Ascending aorta (tissue), 2 donors: ENCODE measurements at regions of chr9 and their contacts with region 1.

Region 1: DNA sequence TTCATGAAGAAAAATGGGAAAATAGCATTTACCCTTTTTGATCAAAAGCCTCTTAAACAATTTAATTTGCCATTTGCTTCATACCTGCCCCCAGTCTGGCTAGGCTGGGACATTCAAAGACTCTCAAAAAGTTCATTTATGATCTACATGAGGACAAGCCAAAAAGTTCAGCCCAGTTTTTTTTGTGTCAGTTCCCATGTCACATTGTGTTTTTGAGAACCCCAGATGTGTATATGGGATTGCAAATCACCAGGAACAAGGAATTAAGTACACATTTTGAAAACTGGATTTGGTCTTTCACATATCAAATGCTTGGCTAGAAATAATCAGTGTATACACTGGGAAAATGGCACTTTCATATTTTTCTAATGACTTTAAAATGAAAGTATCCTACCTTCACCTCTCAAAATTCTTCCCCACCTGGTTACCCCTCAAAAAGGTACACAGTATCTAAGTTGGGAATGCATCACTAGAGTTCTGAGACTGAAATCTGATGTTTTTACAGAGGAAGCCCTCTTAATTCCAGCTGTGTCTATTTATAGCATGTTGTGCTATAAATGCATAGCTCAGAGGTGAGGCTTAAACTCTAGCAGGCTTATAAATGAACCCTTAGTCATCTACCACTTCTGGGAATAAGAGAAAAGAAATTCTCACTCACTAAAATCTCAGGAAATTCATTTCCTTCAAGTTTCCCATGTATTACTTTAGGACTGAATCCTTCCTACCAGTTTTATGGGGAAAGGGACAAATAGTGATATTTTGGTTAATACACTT is 9.3 kb downstream of the STOM start:
- DNase-seq: no peak
- H3K4me3 ChIP-seq: no peak overlapping the region
- H3K27ac ChIP-seq: peak overlapping the region; percentile 85 to 98
- H3K4me1 ChIP-seq: peaks cover 14 to 61% of the 10 kb centered on the region in 2 donors
- H3K27me3 ChIP-seq: no peaks in the 10 kb centered on the region
- CTCF ChIP-seq: no peak

Region 2: DNA sequence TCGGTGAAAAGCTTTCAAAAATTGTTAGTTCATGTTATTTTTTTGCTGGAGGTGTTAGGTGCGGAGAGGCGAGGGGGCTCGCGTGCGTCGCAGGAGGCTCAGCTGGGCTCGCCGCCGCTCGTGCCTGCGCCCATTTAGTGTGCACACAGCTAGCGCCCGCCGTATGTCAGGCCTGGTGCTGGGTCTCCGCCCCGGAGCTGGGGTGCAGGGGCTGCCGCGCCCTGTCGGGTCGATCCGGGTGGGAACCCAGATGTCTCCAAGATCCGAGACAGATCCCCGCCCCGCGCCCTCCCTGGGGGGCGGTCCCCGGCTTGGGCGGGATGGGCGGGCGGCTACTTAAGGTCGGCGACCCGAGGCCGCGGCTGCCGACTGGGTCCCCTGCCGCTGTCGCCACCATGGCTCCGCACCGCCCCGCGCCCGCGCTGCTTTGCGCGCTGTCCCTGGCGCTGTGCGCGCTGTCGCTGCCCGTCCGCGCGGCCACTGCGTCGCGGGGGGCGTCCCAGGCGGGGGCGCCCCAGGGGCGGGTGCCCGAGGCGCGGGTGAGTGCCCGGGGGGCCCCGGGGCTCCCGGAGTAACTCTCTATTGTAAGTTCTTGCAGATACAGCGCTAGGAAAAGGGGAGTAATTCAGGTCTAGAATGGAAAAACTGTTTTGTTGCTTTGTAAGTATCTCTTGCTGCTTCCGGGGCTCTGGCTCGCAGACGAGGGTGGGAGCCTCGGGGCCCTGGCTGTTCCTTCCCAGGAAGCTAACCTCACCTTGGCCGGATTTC is 61.1 kb before region 1 on chr9:
- intact Hi-C with region 1: no loop called
- DNase-seq: peak in 1 of 2 donors; percentile 88
- H3K4me3 ChIP-seq: peak overlapping the region; percentile 70 to 74
- H3K27ac ChIP-seq: peak overlapping the region; percentile 92 to 99
- H3K4me1 ChIP-seq: peaks cover 51 to 82% of the 10 kb centered on the region in 2 donors
- H3K27me3 ChIP-seq: no peaks in the 10 kb centered on the region
- CTCF ChIP-seq: no peak

Region 3: DNA sequence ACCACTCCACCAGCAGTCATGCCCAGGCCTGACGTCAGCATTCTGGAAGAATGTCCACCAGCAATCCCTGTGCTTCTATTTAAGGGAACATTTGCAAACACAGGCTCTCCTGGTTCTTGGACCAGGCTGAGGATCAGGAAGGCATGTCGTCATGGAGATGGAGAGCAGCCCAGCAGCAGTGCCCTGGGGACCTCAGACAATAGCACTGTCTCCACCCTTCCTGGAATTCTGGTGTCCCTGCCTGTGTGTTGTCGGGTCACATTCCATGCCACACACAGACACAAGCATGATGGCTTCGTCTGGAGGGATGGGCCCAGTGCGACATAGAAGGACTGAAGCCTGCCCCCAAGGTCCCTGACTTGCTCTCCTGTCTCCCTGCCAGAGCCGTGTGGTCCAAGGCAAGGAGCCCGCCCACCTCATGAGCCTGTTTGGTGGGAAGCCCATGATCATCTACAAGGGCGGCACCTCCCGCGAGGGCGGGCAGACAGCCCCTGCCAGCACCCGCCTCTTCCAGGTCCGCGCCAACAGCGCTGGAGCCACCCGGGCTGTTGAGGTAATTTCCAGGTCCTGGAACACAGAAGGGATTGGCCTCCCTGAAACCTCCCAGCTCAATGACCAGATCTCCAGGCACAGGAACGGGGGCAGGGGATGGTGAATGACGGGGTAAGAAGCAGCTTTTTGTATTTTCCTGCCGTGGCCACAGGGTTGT is 34.5 kb before region 1 on chr9:
- intact Hi-C with region 1: loop called (anchors 2 kb)
- DNase-seq: peak; percentile 92 to 99
- H3K4me3 ChIP-seq: peak overlapping the region in 1 of 2 donors; percentile 34
- H3K27ac ChIP-seq: peak overlapping the region; percentile 98 to 99
- H3K4me1 ChIP-seq: peaks cover 26 to 75% of the 10 kb centered on the region in 2 donors
- H3K27me3 ChIP-seq: no peaks in the 10 kb centered on the region
- CTCF ChIP-seq: no peak